Naive thymus-derived CD4-positive, alpha-beta T cell (primary cell): ENCODE measurements at regions of chr10 and their contacts with region 1.

Region 1: DNA sequence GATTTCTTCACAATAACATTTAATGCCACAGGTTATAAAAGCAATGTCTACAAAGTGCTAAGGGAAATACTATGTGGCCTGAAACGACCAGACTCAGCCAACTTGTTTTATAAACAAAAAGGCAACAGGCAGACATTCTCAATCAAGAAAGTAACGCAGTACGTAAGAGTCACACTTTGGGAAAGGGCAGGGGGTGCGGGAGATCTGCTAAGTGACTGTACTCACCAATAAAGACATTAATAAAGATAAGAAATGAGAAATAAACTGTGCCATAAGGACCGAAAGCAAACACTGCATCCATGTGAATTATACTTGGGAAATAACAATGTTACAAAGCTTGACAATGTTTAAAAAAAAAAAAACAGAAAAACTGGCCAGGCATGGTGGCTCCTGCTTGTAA is 25.5 kb downstream of the NSUN6 start:
- DNase-seq: no peak
- ATAC-seq: no peak
- H3K4me3 ChIP-seq: no peak overlapping the region
- H3K4me3 Mint-ChIP-seq: peak overlapping the region in 8 of 10 donors; percentile 14 to 81 (median 36)
- H3K27ac ChIP-seq: no peak overlapping the region
- H3K27ac Mint-ChIP-seq: peak overlapping the region in 6 of 9 donors; percentile 42 to 93 (median 77)
- H3K4me1 ChIP-seq: no peaks in the 10 kb centered on the region
- H3K4me1 Mint-ChIP-seq: peaks cover 17 to 23% (median 17%) of the 10 kb centered on the region in 7 donors
- H3K27me3 ChIP-seq: no peaks in the 10 kb centered on the region
- H3K27me3 Mint-ChIP-seq: no peaks in the 10 kb centered on the region

Region 2: DNA sequence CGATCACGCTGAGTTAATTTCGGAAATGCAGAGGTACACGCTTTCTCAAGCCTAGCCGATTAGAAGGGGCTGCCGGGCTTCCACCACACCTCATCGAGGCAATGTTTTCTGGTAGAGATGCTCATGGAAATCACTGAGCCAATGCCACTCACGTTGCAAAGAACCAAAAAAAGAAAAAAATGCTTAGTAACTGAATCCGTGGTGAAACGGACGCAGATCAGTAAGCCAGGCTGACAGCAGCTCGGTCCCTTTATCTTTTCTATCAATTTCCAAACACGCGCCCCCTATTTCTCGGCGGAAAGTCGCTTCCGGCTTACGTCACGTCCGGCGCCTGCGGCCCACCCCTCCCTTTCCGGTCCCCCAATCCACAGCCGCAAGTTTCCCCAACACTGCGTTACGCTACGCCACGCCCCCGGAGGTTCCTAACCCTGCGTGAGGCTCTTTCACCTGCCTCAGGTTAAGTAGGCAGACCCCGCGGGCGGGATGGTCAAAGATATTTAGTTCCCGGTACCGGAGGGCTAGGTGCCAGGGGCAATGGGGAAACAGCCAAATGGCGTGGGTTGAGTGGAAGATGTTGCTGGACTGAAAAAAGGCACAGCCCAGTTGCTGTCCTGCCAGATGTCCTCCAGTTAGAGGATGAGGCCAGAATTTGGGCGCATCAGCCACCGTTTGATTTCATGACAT is 25.6 kb after region 1 on chr10 and contains the start of gene NSUN6:
- CTCF ChIA-PET with region 1: no interaction called
- POLR2A ChIA-PET with region 1: interaction called, 3 read pairs
- intact Hi-C with region 1: loop called (anchors 1 kb)
- DNase-seq: peak; percentile 82 to 95 (median 95)
- ATAC-seq: peak; percentile 99
- H3K4me3 ChIP-seq: peak within 1 kb of the TSS; percentile 93
- H3K4me3 Mint-ChIP-seq: peak within 1 kb of the TSS; percentile 92 to 99 (median 96)
- H3K27ac ChIP-seq: peak within 1 kb of the TSS; percentile 91
- H3K27ac Mint-ChIP-seq: peak within 1 kb of the TSS; percentile 94 to 99 (median 98)
- H3K4me1 ChIP-seq: peaks cover 3 to 10% of the 10 kb centered on the region in 2 donors
- H3K4me1 Mint-ChIP-seq: peaks cover 10 to 53% (median 47%) of the 10 kb centered on the region in 7 donors
- H3K27me3 ChIP-seq: no peaks in the 10 kb centered on the region
- H3K27me3 Mint-ChIP-seq: peaks cover 0 to 2% (median 0%) of the 10 kb centered on the region in 5 donors
- total RNA-seq, gene NSUN6: 19.6 to 51.8 (median 41.3) TPM

Region 3: DNA sequence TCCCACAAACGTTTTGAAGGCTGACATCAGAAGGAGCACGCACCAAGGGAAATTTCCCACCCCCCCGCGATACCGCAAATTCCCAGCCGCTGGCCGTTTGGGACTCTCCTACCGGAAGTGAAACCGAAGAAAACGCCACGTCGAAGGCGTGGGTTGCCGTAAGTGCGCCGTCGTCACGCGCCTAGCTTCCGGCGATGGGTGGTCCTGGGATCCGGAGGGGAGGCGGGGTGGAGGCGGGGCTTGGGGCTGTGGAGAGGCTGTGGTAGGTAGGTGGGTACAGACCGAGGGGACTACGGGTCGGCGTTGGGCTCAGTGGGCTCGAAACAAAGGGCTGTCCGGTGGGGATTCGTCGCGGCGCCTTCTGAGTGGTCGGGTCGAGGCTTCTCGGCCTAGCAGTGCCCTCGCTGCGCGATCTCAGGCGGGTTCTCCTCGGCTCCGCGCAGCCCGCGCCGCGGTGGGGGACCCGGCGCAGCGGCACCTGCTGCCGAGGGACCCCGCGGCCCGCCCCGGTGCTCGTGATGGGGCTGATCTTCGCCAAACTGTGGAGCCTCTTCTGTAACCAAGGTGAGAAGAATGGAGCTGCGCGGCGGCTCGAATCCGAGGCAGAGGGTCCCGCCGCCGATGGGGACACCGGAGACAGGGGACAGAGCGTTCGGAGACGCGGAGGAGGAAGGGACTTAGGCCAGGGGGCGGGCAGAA is 33.4 kb after region 1 on chr10 and contains the start of gene ARL5B:
- CTCF ChIA-PET with region 1: interaction called, 6 read pairs
- POLR2A ChIA-PET with region 1: interaction called, 4 read pairs
- intact Hi-C with region 1: loop called (anchors 1 kb)
- DNase-seq: peak; percentile 82 to 97 (median 93)
- ATAC-seq: peak; percentile 98
- H3K4me3 ChIP-seq: peak within 1 kb of the TSS; percentile 89
- H3K4me3 Mint-ChIP-seq: peak within 1 kb of the TSS; percentile 94 to 100 (median 99)
- H3K27ac ChIP-seq: peak within 1 kb of the TSS; percentile 92
- H3K27ac Mint-ChIP-seq: peak within 1 kb of the TSS; percentile 95 to 99 (median 99)
- H3K4me1 ChIP-seq: peaks cover 16 to 21% of the 10 kb centered on the region in 2 donors
- H3K4me1 Mint-ChIP-seq: peaks cover 28 to 56% (median 44%) of the 10 kb centered on the region in 7 donors
- H3K27me3 ChIP-seq: no peaks in the 10 kb centered on the region
- H3K27me3 Mint-ChIP-seq: no peaks in the 10 kb centered on the region
- total RNA-seq, gene ARL5B: 9.7 to 15.8 (median 13.9) TPM